OCI-LY7 (cell line): ENCODE measurements at regions of chr1 and their contacts with region 1.

Region 1: DNA sequence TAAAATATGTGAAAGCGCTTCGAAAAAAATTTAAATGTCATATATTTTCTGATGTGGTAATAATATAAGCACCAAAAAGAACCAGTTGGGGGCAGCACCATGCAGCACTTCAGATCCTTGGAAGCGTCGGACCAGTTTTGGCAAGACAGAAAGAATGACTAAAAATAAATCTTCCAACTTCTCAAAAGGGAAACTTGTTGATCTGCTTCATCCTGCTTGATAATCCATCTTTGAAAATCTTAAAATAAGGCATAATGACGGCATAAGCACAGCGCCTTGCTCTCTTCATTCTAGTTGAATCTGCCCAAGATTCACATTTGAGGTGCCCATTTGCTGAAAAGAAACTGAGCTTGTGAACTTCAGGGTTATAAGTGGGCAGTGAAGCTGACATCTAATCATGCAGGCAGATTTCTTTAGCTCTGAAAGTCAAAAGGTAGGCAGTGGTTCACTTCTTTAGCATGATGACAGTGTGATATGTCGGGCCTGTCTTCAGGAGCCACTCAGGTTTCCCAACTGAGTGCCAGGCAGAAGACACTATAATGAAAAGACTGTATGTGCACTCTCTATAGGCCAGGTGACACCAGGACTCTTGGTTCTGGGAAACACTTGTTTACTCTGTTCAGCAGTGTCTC is 19.8 kb upstream of the MUTYH start:
- DNase-seq: peak; percentile 74
- H3K4me3 ChIP-seq: no peak overlapping the region
- H3K27ac ChIP-seq: no peak overlapping the region
- H3K4me1 ChIP-seq: peaks cover 15% of the 10 kb centered on the region
- CTCF ChIP-seq: peak; percentile 93

Region 2: GRCh38 chr1:45172024-45172423 is 188.0 kb before region 1 on chr1:
- CTCF ChIA-PET with region 1: no interaction called
- POLR2A ChIA-PET with region 1: no interaction called
- intact Hi-C with region 1: no loop called
- DNase-seq: no peak
- H3K4me3 ChIP-seq: no peak overlapping the region
- H3K27ac ChIP-seq: no peak overlapping the region
- H3K4me1 ChIP-seq: no peaks in the 10 kb centered on the region
- CTCF ChIP-seq: no peak

Region 3: DNA sequence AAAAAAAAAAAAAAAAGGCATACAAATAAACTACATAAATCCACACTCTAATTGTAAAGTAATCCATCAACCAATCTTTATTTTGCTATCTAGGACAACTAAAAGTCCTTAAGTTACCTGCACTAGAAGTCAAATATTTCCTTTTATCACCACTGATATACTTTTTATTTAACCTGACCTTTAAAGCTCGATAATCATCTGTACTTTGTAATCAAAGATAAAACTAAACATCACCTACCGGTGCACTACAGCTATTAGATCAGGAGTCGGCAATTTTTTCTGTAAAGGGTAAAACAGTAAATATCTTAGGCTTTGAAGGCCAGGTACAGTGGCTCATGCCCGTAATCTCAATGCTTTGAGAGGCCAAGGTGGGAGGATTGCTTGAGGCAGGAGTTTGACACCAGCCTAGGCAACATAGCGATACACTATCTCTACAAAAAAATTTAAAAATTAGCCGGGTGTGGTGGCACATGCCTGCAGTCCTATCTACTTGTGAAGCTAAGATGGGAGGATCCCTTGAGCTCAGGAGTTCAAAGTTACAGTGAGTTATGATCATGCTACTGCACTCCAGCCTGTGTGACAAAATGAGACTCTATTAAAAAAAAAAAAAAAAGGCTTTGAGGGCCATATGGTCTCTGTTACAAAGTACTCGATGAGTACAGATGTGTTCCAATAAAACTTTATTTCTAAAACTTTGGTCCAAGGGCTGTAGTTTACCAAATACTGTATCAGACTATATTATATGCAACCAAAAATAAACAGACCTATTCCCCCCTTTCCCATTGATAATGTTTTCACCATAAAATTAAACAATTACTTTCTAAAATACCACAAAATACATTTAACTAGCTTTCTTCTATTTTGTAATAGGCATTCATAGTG is 83.8 kb after region 1 on chr1:
- CTCF ChIA-PET with region 1: no interaction called
- POLR2A ChIA-PET with region 1: interaction called, 10 read pairs
- intact Hi-C with region 1: no loop called
- DNase-seq: no peak
- H3K4me3 ChIP-seq: no peak overlapping the region
- H3K27ac ChIP-seq: no peak overlapping the region
- H3K4me1 ChIP-seq: no peaks in the 10 kb centered on the region
- CTCF ChIP-seq: no peak

Region 4: DNA sequence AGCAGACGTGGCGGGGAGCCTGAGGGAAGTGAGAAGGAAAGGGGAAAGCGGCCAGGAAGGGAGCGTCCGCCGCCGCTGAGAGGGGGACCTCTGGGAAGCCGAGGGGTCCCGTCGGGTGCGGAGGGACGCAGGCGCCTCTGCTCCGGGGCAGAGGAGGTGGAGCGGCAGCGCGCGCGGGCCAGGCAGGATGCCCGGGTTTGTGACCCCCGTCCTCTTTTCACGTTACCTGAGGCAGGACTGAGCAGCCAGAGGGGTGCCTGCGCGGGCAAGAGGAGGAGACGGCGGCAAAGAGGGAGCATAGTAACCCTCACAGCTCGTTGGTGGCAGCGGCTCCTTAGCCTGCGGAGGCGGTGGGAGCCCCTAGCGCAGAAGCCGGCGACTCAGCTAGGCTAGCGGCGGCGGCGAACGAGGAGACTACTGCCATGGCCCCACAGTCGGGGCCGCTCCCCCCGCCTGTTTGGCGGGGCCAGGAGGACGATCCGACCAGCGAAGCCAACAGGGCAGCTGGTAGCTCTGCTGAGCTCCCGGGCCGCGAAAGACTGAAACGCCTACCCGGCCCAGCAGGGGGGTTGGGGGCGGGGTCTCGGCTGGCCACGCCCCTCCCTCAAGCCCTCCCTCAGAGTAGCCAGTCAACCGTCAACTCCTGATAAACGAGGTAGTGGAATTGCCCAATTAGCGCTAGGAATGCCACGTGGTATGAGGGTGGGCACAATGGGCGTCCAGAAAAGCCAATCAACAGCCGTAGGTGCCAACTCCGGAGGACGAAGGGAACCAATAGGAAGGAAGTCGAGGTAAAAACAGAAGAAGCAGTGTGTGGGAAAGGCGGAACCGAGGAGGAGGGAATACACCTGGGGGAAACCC is 130.9 kb after region 1 on chr1 and contains the start of gene TESK2:
- CTCF ChIA-PET with region 1: interaction called, 21 read pairs
- POLR2A ChIA-PET with region 1: interaction called, 14 read pairs
- intact Hi-C with region 1: loop called (anchors 1 kb)
- DNase-seq: peak; percentile 100
- H3K4me3 ChIP-seq: peak within 1 kb of the TSS; percentile 75
- H3K27ac ChIP-seq: peak within 1 kb of the TSS; percentile 15
- H3K4me1 ChIP-seq: peaks cover 32% of the 10 kb centered on the region
- CTCF ChIP-seq: no peak
- total RNA-seq, gene TESK2: 4.9 and 5.0 TPM in 2 replicates